Dendritic cell treated with granulocyte-macrophage colony-stimulating factor and Interleukin-4, amounts not matched to agents 40 ng/mL and 50 ng/mL, for 4 days (primary cell): ENCODE measurements at regions of chr17 and their contacts with region 1.

Region 1: GRCh38 chr17:78745407-78746088 is 36.5 kb downstream of the CYTH1 start:
- H3K4me3 Mint-ChIP-seq: no peak overlapping the region
- H3K27ac Mint-ChIP-seq: peak overlapping the region; percentile 79
- H3K4me1 Mint-ChIP-seq: peaks cover 82% of the 10 kb centered on the region
- H3K27me3 Mint-ChIP-seq: no peaks in the 10 kb centered on the region

Region 2: DNA sequence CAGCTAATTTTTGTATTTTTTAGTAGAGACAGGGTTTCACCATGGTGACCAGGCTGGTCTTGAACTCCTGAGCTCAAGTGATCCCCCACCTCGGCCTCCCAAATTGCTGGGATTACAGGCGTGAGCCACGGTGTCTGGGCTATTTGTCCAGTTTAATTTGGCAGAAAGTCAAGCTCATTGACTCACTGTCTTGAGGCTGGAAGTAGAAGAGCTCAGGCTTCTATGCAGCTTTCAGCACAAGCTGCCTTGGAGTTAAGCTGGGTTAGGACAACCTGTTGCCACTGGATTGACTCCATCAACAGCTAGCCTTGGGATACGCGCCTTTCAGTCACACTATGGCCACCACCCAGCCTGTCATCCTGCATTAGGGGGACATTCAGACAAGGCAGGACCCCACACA is 92.2 kb before region 1 on chr17:
- intact Hi-C with region 1: no loop called
- H3K4me3 Mint-ChIP-seq: no peak overlapping the region
- H3K27ac Mint-ChIP-seq: peak overlapping the region; percentile 46
- H3K4me1 Mint-ChIP-seq: peaks cover 35% of the 10 kb centered on the region
- H3K27me3 Mint-ChIP-seq: peaks cover under 1% of the 10 kb centered on the region

Region 3: GRCh38 chr17:78781948-78782916 is 36.7 kb after region 1 on chr17 and contains the start of gene CYTH1:
- intact Hi-C with region 1: loop called (anchors 5 kb)
- H3K4me3 Mint-ChIP-seq: peak within 1 kb of the TSS; percentile 79
- H3K27ac Mint-ChIP-seq: peak within 1 kb of the TSS; percentile 89
- H3K4me1 Mint-ChIP-seq: peaks cover 38% of the 10 kb centered on the region
- H3K27me3 Mint-ChIP-seq: no peaks in the 10 kb centered on the region

Region 4: GRCh38 chr17:78865682-78866390 is 120.3 kb after region 1 on chr17:
- intact Hi-C with region 1: no loop called
- H3K4me3 Mint-ChIP-seq: peak overlapping the region; percentile 45
- H3K27ac Mint-ChIP-seq: no peak overlapping the region
- H3K4me1 Mint-ChIP-seq: peaks cover 72% of the 10 kb centered on the region
- H3K27me3 Mint-ChIP-seq: no peaks in the 10 kb centered on the region